ENCODE measurements at regions of chr5 and their contacts with region 1.

Region 1: GRCh38 chr5:77030097-77031071 is at the start of gene AGGF1:
- DNase-seq: peak; percentile 87
- H3K4me3 Mint-ChIP-seq: peak within 1 kb of the TSS; percentile 90
- H3K27ac Mint-ChIP-seq: peak within 1 kb of the TSS; percentile 86
- H3K4me1 Mint-ChIP-seq: peaks cover 29% of the 10 kb centered on the region
- H3K27me3 Mint-ChIP-seq: peaks cover 4% of the 10 kb centered on the region
- total RNA-seq, gene AGGF1: 26.2 and 30.4 TPM in 2 replicates

Region 2: GRCh38 chr5:76736679-76737556 is 293.5 kb before region 1 on chr5:
- intact Hi-C with region 1: loop called (anchors 2 kb)
- DNase-seq: no peak
- H3K4me3 Mint-ChIP-seq: no peak overlapping the region
- H3K27ac Mint-ChIP-seq: peak overlapping the region; percentile 57
- H3K4me1 Mint-ChIP-seq: peaks cover 63% of the 10 kb centered on the region
- H3K27me3 Mint-ChIP-seq: no peaks in the 10 kb centered on the region

Region 3: DNA sequence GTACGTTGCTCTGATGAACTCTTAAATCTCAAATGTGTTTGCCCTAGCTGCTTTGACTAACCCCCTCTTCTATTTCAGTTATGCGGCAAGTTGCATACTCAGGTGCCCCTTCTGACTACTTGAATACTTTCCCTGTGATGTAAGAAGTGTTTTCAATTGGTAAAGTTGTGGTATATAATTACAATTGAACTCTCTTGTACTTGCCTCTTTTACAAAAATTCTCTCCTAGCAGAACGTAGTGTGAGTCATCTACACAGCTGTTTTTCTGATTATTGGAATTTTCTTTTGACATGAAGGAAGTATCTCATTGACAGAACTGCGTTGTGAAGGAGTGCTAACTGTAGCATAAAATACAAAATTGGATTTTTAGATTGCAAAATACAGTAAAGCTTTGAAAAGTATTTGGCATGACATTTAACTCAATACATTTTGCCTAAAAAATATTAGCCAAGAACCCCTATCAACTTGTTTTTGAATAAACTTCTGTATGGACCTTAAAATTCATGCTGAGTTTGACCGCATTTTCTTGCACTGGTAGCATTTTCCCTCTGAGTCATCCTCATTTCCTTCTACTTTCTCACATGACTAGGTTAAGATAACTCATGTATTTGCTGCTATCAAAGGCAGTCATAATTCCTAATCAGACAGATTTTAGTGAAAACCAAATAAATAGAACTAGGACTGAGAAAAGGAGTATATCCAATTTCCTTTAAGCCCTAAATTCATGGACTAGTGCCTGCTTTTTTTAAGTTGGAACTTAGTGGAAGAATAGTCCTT is 71.2 kb before region 1 on chr5:
- intact Hi-C with region 1: loop called (anchors 2 kb)
- DNase-seq: no peak
- H3K4me3 Mint-ChIP-seq: no peak overlapping the region
- H3K27ac Mint-ChIP-seq: no peak overlapping the region
- H3K4me1 Mint-ChIP-seq: peaks cover 23% of the 10 kb centered on the region
- H3K27me3 Mint-ChIP-seq: peaks cover 40% of the 10 kb centered on the region

Region 4: DNA sequence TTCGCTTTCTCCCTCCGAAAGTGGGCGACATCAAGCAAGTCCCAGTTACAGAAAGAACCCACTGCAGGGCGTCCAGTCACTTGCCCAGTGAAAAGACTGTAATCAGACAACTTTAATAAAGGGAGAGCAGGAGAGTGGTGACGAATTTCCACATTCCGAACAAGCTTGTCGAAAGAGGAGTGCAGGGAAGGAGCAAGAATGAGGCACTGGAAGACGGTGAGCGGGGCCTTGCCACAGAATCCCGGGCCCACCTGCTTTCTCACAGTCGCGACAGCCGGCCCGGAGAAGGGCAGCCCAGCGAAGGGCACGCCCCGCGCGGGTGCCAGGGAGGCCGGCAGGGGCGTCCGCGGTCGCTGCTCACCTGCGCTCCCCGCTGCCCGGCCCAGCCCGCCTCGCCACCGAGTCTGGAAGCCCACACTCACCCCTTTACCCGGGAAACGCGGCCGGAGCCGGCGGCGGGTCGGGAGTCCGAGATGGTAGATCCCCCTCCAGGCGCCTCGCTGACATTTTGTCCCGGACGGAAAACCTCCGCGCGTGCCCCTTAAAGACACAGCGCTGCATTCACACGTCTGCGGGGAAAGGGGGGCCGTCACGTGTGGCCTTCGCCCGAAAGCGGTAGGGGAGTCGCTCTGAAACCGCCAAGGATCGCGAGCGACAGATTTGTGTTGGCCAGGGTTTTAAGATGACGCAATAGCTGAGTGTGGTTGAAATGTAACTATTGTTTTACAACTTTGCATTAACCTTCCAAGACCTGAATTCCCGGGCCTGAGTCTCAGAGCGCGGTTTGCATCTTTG is 56.5 kb after region 1 on chr5 and contains the start of gene ZBED3:
- intact Hi-C with region 1: loop called (anchors 1 kb)
- DNase-seq: peak; percentile 10
- H3K4me3 Mint-ChIP-seq: peak within 1 kb of the TSS; percentile 84
- H3K27ac Mint-ChIP-seq: peak within 1 kb of the TSS; percentile 5
- H3K4me1 Mint-ChIP-seq: peaks cover 8% of the 10 kb centered on the region
- H3K27me3 Mint-ChIP-seq: peaks cover 9% of the 10 kb centered on the region
- total RNA-seq, gene ZBED3: 0.49 and 1.0 TPM in 2 replicates